ENCODE measurements at regions of chr10 and their contacts with region 1.

Region 1: GRCh38 chr10:80580638-80581468 is 43.2 kb downstream of the SH2D4B start:
- DNase-seq: no peak
- ATAC-seq: no peak
- H3K4me3 ChIP-seq: no peak overlapping the region
- H3K27ac ChIP-seq: no peak overlapping the region
- H3K4me1 ChIP-seq: peaks cover 0 to 15% (median 0%) of the 10 kb centered on the region in 12 donors
- H3K27me3 ChIP-seq: no peaks in the 10 kb centered on the region
- CTCF ChIP-seq: no peak
- POLR2A ChIP-seq: no peak

Region 2: GRCh38 chr10:80408242-80409101 is 172.4 kb before region 1 on chr10 and contains the start of gene PRXL2A:
- intact Hi-C with region 1: no loop called
- DNase-seq: peak; percentile 89 to 95 (median 91)
- ATAC-seq: peak; percentile 86 to 96 (median 94)
- H3K4me3 ChIP-seq: peak within 1 kb of the TSS; percentile 57 to 94 (median 85)
- H3K27ac ChIP-seq: peak within 1 kb of the TSS; percentile 62 to 95 (median 86)
- H3K4me1 ChIP-seq: peaks cover 3 to 60% (median 50%) of the 10 kb centered on the region in 12 donors
- H3K27me3 ChIP-seq: peaks cover 0 to 6% (median 0%) of the 10 kb centered on the region in 9 donors
- CTCF ChIP-seq: peak in 1 of 12 donors; percentile 9
- POLR2A ChIP-seq: peak in 1 of 2 donors; percentile 70
- total RNA-seq, gene PRXL2A: 63.9 to 123 (median 78.6) TPM

Region 3: DNA sequence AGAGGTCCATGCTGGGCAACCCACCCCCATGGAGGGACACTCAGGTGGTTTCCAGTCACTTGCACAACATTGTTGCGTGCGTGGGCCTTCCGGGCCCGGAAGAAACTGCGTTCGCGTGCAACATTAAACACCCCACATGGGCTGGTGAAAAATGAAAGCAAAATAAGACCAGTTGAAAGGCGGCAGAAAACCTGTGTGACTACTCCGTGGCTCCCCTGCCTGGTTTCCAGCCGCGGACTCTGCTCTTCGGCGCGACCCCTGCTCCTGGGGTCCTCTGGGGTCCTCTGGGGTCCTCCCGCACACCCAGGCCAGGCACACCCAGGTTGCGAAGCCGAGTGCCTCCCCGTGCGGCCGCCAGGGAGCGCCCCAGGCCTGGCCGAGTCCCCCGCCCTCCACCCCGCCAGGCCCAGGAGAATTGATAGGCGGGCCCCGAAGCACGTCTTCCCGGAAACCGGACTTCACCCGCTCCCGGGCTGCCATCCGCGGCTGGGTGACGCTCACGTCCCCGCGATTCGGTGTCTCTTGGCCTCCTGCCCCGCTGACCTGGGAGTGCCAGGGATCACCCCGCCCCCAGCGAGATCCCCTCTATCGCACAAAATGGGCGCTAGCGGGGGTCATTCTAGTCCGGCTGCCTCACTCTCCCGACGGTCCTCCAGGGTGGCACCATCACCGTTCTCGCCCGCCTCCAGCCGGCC is 45.0 kb before region 1 on chr10:
- intact Hi-C with region 1: loop called in 2 of 10 experiments (anchors 5 kb)
- DNase-seq: peak; percentile 51 to 89 (median 78)
- ATAC-seq: peak; percentile 38 to 92 (median 90)
- H3K4me3 ChIP-seq: peak overlapping the region in 11 of 12 donors; percentile 17 to 61 (median 50)
- H3K27ac ChIP-seq: peak overlapping the region in 11 of 12 donors; percentile 31 to 87 (median 66)
- H3K4me1 ChIP-seq: peaks cover 0 to 26% (median 12%) of the 10 kb centered on the region in 12 donors
- H3K27me3 ChIP-seq: no peaks in the 10 kb centered on the region
- CTCF ChIP-seq: peak; percentile 57 to 81 (median 65)
- POLR2A ChIP-seq: peak in 1 of 2 donors; percentile 20

Measured in heart left ventricle (tissue), 16 donors.